Astrocyte of the cerebellum (primary cell): ENCODE measurements at regions of chr7 and their contacts with region 1.

Region 1: GRCh38 chr7:140902303-140902953 is 22.3 kb downstream of the BRAF start:
- DNase-seq: no peak
- H3K4me3 ChIP-seq: no peak overlapping the region
- CTCF ChIP-seq: no peak

Region 2: GRCh38 chr7:140966561-140967226 is 64.3 kb after region 1 on chr7:
- in situ Hi-C with region 1: loop called (anchors 5 kb)
- DNase-seq: no peak
- H3K4me3 ChIP-seq: no peak overlapping the region
- CTCF ChIP-seq: no peak